ENCODE measurements at regions of chr1 and their contacts with region 1.

Region 1: GRCh38 chr1:16351994-16352841 is at the start of gene FBXO42:
- DNase-seq: peak; percentile 91
- H3K4me3 Mint-ChIP-seq: peak within 1 kb of the TSS; percentile 88
- H3K27ac Mint-ChIP-seq: peak within 1 kb of the TSS; percentile 95
- H3K4me1 Mint-ChIP-seq: peaks cover 28% of the 10 kb centered on the region
- H3K27me3 Mint-ChIP-seq: no peaks in the 10 kb centered on the region
- total RNA-seq, gene FBXO42: 15.5 to 19.3 TPM

Region 2: DNA sequence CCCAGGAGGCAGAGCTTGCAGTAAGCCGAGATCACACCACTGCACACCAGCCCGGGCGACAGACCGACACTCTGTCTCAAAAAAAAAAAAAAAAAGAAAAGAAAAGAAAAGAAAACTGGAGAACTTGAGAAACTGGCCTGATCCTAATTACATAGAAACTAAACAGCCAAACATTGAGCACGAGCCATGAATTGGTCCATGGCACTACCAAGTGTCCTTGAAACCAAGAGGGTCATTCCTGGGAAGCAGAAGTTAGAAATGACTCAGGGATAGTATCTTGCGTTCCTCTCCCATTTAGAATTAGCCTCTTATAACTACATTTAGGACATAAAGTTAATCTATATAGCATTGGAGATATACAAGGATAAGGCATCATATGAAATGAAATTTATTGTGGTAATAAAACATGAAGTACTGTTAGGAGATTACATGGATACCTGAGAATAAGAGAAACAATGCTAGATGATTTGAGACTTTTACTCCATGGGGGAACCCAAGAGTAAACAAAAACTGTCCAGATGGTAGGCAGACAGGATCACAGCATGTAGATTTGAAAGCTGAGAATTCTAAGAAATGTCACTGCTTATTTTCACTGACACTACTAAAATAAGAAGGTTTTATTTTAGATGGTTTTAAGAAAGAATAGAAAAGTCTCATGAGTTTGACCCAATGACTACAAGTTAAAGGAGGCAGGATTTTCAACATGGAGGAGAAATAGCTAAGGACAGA is 75.8 kb before region 1 on chr1:
- CTCF ChIA-PET with region 1: no interaction called
- POLR2A ChIA-PET with region 1: interaction called, 12 read pairs
- DNase-seq: no peak
- H3K4me3 Mint-ChIP-seq: no peak overlapping the region
- H3K27ac Mint-ChIP-seq: no peak overlapping the region
- H3K4me1 Mint-ChIP-seq: no peaks in the 10 kb centered on the region
- H3K27me3 Mint-ChIP-seq: no peaks in the 10 kb centered on the region

Region 3: GRCh38 chr1:16366722-16367257 is 14.6 kb after region 1 on chr1 and contains the start of gene SZRD1:
- CTCF ChIA-PET with region 1: interaction called, 16 read pairs
- POLR2A ChIA-PET with region 1: no interaction called
- DNase-seq: peak; percentile 98
- H3K4me3 Mint-ChIP-seq: peak within 1 kb of the TSS; percentile 97
- H3K27ac Mint-ChIP-seq: peak within 1 kb of the TSS; percentile 100
- H3K4me1 Mint-ChIP-seq: peaks cover 44% of the 10 kb centered on the region
- H3K27me3 Mint-ChIP-seq: no peaks in the 10 kb centered on the region
- total RNA-seq, gene SZRD1: 156 to 177 TPM